Ascending aorta (tissue), 2 donors: ENCODE measurements at regions of chr7 and their contacts with region 1.

Region 1: GRCh38 chr7:143287935-143288826 is at the start of gene CASP2:
- DNase-seq: peak; percentile 93 to 99
- H3K4me3 ChIP-seq: peak within 1 kb of the TSS; percentile 89 to 93
- H3K27ac ChIP-seq: peak within 1 kb of the TSS; percentile 94
- H3K4me1 ChIP-seq: peaks cover 3 to 11% of the 10 kb centered on the region in 2 donors
- H3K27me3 ChIP-seq: no peaks in the 10 kb centered on the region
- CTCF ChIP-seq: peak; percentile 25 to 59 (median 48)
- total RNA-seq, gene CASP2: 13.7 TPM

Region 2: DNA sequence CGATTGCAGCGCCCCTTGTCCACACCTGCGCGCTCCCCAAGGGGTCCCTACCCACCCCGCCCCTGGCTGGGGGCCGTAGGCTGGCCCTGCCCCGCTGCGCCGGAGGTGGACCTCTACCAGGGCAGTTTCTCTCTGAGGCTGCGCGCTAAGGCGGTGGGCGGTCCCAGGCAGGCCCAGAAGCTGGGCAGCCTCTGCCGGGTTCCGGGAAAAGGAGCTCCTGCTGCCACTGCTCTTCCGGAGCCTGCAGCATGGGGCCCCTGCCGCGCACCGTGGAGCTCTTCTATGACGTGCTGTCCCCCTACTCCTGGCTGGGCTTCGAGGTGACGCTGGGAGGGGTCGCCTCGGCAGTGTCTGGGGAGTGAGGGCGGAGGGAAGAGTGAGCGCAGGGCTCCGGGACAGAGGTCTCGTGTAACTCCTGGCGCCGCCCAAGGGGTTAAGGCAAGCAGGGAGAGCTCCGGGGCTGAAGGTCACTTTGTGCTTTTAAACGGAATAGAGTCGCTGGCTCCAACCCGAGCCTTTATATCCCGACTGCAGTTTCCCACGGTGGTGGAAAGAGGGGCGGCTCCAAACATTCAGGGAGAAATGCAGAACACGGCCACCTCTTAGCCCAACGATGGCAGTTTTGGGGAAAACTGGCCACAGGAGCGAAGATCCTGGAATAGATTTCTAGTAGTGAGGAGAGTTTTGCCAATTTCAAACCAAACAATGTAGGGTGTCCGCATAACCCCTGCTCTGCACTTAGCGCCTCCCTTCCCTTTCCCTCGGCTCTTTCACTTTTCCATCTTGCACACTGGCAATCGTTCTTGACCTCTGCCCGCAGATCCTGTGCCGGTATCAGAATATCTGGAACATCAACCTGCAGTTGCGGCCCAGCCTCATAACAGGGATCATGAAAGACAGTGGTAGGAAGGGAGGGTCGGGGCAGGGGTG is 24.6 kb before region 1 on chr7 and contains the start of gene GSTK1:
- intact Hi-C with region 1: loop called (anchors 1 kb)
- DNase-seq: peak; percentile 33 to 90
- H3K4me3 ChIP-seq: peak within 1 kb of the TSS; percentile 85 to 94
- H3K27ac ChIP-seq: peak within 1 kb of the TSS; percentile 76 to 82
- H3K4me1 ChIP-seq: peaks cover 4 to 9% of the 10 kb centered on the region in 2 donors
- H3K27me3 ChIP-seq: no peaks in the 10 kb centered on the region
- CTCF ChIP-seq: no peak
- total RNA-seq, gene GSTK1: 174 TPM

Region 3: DNA sequence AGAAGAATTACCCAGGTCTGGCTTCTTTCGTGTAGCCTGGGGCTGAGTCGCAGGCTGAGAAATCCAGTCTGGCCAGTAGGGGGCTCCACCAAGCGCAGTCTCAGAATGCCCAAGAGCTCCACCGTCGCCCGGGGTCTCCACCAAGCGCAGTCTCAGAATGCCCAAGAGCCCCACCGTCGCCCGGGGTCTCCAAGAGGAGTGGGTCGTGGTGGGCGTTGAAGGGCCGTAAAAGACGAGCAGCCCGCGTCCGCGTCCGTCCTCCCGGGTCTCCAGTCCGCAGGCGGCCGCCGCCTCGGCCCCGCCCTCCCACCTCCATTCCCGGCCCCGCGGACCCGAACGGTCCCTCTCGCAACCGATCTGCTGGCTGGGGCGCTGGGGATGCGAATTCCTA is 92.1 kb after region 1 on chr7:
- intact Hi-C with region 1: loop called (anchors 1 kb)
- DNase-seq: peak; percentile 67 to 94
- H3K4me3 ChIP-seq: peak overlapping the region; percentile 89 to 97
- H3K27ac ChIP-seq: peak overlapping the region; percentile 97 to 99
- H3K4me1 ChIP-seq: peaks cover 5 to 24% of the 10 kb centered on the region in 2 donors
- H3K27me3 ChIP-seq: no peaks in the 10 kb centered on the region
- CTCF ChIP-seq: peak; percentile 79 to 90 (median 88)

Region 4: DNA sequence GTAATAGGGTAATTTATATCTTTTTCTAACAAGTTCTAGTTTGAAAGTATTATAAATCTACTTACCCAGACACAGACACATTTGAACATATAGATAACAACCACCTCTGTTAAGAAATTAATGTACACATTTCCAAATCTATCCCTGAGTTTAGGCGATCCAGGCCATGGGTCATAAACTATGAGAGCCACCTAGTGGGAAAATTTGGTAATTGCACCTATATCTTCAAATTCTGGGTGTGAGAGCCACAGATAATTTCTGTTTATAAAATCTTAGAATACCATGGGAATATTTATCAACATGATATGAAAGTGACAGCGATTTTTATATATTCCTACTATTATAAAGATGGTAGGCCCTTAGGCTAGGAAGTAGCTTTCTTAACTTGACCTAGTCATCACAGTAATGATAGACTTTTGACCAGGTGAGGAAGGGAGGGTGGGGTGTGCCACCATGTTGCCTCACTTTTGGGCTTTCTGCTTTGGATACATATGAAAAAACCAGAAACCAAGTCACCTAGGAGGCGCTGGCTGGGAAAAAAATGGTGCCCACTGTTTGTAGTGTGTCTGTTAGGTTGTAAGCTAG is 128.5 kb after region 1 on chr7:
- intact Hi-C with region 1: loop called (anchors 2 kb)
- DNase-seq: no peak
- H3K4me3 ChIP-seq: no peak overlapping the region
- H3K27ac ChIP-seq: no peak overlapping the region
- H3K4me1 ChIP-seq: peaks cover 3 to 4% of the 10 kb centered on the region in 2 donors
- H3K27me3 ChIP-seq: no peaks in the 10 kb centered on the region
- CTCF ChIP-seq: peak; percentile 65 to 81 (median 73)